Gastrocnemius medialis (tissue), 4 donors: ENCODE measurements at regions of chr15 and their contacts with region 1.

Region 1: DNA sequence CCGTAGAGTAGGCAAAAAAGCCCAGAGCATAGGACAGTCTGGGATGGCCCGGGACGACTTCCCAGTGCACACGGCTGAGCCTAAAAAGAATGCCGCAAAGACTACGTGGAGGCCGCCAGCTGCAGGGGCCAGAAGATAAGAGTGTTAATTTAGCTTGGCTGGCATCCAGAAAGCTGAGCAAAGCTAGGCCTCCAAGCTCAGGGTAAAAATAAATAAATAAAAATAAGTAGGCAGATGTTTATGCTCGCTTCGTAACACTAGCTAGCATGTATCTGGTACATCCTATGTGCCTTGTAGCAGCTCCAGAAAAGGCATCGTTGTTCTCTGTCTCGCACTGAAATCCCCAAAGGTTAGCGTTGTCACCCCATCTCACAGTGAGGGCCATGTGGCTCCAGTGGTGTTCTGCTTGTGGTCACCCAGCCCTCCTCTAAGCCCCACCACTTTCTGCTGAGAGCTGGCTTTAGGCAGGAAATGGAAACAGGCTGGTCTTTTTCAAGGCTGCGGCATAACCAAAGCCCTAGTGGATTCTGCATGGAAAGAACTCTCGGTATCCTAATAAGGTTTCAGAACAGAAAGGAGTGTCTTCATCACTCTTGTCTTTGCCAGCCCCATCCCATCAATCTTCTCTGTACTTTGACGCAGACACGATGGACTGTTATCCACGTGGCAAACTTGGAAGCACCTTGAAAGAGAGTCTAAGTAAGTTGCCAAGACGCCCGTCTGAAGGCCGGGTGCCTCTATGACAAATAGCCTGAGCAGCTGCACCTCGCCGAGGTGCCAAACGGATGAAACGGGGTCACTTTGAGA is 58.1 kb upstream of the MEF2A start:
- DNase-seq: peak; percentile 90 to 97
- ATAC-seq: peak; percentile 82 to 86
- H3K4me3 ChIP-seq: peak overlapping the region; percentile 31 to 48 (median 34)
- H3K27ac ChIP-seq: peak overlapping the region; percentile 91 to 94 (median 92)
- H3K4me1 ChIP-seq: peaks cover 61 to 70% of the 10 kb centered on the region in 2 donors
- H3K27me3 ChIP-seq: no peaks in the 10 kb centered on the region
- CTCF ChIP-seq: peak in 1 of 5 experiments; percentile 19
- POLR2A ChIP-seq: peak in 1 of 2 donors; percentile 60

Region 2: GRCh38 chr15:99250494-99251435 is 256.9 kb before region 1 on chr15:
- in situ Hi-C with region 1: no loop called
- intact Hi-C with region 1: loop called (anchors 5 kb)
- DNase-seq: peak; percentile 98 to 99
- ATAC-seq: peak; percentile 94 to 95
- H3K4me3 ChIP-seq: peak overlapping the region; percentile 53 to 89 (median 84)
- H3K27ac ChIP-seq: peak overlapping the region; percentile 93 to 96 (median 96)
- H3K4me1 ChIP-seq: peaks cover 34 to 40% of the 10 kb centered on the region in 2 donors
- H3K27me3 ChIP-seq: no peaks in the 10 kb centered on the region
- CTCF ChIP-seq: no peak
- POLR2A ChIP-seq: peak; percentile 89 to 96

Region 3: DNA sequence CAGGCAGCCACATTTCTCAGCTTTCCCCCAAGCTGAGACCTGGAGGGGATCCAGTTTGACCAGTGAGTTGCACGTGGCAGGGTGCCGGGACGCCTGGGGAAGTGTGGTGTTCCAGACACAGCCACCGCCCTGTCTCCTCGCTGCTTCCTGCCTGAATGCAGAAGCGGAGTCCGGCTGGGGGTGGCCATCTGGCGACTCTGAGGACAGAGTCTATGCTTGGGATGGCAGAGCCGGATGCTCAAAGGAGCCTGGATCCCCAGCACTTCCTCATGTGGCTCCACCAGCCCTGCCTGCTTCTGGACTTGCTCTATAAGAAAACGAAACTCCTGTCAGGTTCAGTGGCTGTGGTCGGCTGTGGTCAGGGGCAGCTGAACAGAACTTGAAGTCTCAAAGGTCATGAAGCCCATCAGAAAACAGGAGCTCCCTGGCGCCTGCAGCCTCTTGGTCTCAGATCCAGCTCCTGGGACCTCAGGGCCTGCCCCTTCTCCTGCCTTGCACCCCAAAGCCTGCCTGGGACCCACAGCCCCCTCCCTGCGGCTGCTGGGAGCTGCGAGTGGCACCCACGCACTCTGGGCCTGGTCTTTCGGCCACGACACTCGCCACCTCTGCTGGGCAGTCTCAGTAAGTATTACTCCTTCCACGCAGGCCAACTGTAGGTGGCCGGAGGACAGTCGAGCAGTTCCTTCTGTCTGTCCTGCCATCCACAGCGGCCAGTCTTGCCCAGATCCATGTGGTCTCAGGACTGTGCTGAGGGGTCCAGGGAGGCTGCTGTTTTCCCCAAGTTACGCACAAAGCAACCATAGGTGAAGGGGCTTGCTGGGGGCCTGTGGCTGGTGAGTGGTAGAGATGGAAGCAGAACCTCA is 54.7 kb before region 1 on chr15:
- in situ Hi-C with region 1: no loop called
- intact Hi-C with region 1: loop called (anchors 10 kb)
- DNase-seq: peak; percentile 61 to 74
- ATAC-seq: peak in 1 of 2 donors; percentile 14
- H3K4me3 ChIP-seq: peak overlapping the region in 2 of 4 donors; percentile 14 to 17
- H3K27ac ChIP-seq: peak overlapping the region; percentile 72 to 90 (median 87)
- H3K4me1 ChIP-seq: peaks cover 41 to 47% of the 10 kb centered on the region in 2 donors
- H3K27me3 ChIP-seq: no peaks in the 10 kb centered on the region
- CTCF ChIP-seq: no peak
- POLR2A ChIP-seq: no peak

Region 4: GRCh38 chr15:99473981-99474906 is 33.5 kb before region 1 on chr15:
- in situ Hi-C with region 1: no loop called
- intact Hi-C with region 1: loop called (anchors 1 kb)
- DNase-seq: peak; percentile 85 to 93
- ATAC-seq: peak; percentile 91 to 93
- H3K4me3 ChIP-seq: peak overlapping the region in 3 of 4 donors; percentile 6 to 37 (median 9)
- H3K27ac ChIP-seq: peak overlapping the region; percentile 86 to 93 (median 90)
- H3K4me1 ChIP-seq: peaks cover 34 to 40% of the 10 kb centered on the region in 2 donors
- H3K27me3 ChIP-seq: no peaks in the 10 kb centered on the region
- CTCF ChIP-seq: no peak
- POLR2A ChIP-seq: peak; percentile 12 to 23

Region 5: DNA sequence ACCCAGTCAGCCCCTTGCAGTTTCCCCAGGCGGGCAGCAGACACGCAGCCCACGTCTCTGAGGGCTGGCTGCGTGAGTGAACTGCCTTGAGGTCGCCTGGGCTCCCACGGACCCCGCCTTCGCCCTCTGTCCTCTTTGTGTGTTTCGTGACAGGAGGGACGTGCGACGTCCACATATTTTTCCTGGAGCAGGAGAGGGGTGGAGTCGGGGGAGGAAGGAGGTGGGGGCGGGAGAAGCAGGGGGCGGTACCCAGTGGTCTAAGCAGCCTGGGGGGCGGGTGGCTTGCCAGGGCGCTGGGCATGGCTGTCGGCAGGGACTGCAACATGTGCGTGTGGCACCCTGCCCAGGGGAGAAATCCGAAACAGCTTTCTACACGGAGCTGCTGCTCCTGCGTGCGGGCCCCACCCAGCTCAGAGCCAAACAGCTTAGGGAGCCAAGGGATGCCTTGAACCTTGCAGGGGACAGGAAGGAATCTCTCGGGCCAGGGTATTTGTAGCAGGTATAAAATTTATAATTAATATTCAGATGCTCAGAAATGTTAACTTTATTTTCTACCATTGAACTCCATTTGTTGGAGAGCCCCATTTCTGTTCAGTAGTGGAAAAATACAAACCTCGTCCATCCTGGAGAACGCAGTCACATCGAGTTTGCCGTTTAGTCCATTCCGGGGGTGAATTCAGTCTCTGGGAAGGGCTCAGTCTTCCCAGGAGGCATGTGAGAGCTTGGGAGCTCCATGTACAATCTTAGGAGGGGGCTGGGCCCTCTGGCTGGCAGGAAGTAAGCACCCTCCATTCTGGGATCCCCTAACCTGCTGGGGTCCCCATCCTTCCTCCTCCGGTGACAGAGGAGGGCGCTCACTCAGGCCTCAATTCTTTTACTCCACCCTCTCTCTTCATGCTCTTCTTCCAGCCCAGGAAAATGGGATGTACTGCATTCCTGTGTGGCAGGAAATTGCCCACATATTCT is 21.1 kb before region 1 on chr15:
- in situ Hi-C with region 1: no loop called
- intact Hi-C with region 1: no loop called
- DNase-seq: peak; percentile 83 to 92
- ATAC-seq: peak; percentile 91 to 94
- H3K4me3 ChIP-seq: peak overlapping the region; percentile 38 to 54 (median 46)
- H3K27ac ChIP-seq: peak overlapping the region; percentile 64 to 76 (median 74)
- H3K4me1 ChIP-seq: peaks cover 8 to 14% of the 10 kb centered on the region in 2 donors
- H3K27me3 ChIP-seq: no peaks in the 10 kb centered on the region
- CTCF ChIP-seq: no peak
- POLR2A ChIP-seq: peak in 1 of 2 donors; percentile 9